ENCODE measurements at regions of chr3 and their contacts with region 1.

Region 1: GRCh38 chr3:155701882-155702465 is 42.9 kb downstream of the PLCH1 start:
- DNase-seq: peak in 3 of 42 donors; percentile 15 to 53 (median 22)

Region 2: GRCh38 chr3:154334973-154335420 is 1367.0 kb before region 1 on chr3:
- intact Hi-C with region 1: loop called (anchors 10 kb)
- DNase-seq: no peak

Region 3: GRCh38 chr3:155352900-155353490 is 349.0 kb before region 1 on chr3:
- intact Hi-C with region 1: loop called (anchors 5 kb)
- DNase-seq: no peak

Region 4: DNA sequence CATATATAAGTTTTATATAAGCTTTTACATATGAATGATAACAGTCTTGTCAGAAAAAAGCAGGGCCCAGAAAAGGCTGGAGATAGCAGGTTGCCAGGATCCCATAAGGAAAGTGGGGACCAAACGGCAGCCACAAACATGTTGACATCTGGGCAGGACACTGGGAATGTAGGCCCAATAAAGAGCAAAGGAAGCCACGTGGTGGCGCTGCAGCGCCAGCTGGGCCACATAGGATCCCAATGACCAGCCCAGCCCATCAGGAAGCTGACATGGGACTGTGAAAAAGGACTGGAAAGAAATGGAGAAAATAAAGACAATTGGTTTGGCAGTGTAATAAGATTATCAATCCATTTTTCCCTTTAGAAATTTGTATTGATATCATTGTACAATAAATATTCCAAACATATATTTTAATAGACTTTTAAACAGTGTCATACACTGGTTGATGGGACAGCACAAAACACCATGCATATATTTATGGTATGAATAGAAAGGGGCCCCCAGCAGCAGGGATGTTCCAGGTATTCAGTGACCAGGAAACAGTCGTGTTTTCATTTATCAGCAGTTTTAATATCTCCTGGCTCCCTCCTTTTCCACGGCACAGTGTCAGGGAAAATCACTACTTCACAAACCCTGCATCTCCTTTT is 319.5 kb before region 1 on chr3:
- intact Hi-C with region 1: loop called (anchors 10 kb)
- DNase-seq: peak in 40 of 42 donors; percentile 20 to 83 (median 56)

Region 5: DNA sequence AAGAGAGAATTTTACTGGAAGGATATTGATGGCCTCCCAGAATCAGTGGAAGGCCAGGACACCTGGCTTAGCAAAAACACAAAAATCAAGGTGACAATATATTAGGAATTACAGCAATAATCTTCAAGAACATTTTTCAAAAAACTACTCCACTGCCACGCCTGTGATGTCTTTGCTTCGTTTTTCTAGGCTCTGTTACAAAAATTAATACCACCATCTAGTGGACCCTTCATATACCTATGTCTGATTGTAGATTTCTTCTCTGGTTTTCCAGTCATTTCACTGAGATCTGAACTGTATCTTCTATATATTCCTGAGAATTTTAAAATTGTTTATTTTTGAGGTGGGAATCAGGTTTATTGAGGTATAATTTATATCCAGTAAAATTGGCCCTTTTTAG is 157.9 kb after region 1 on chr3:
- intact Hi-C with region 1: loop called (anchors 10 kb)
- DNase-seq: no peak